B cell (primary cell): ENCODE measurements at regions of chr6 and their contacts with region 1.

Region 1: GRCh38 chr6:143842902-143843676 is at the start of gene LTV1:
- DNase-seq: peak; percentile 95
- ATAC-seq: peak; percentile 97
- H3K4me3 ChIP-seq: peak within 1 kb of the TSS; percentile 72 to 94 (median 90)
- H3K4me3 Mint-ChIP-seq: peak within 1 kb of the TSS; percentile 93
- H3K27ac ChIP-seq: peak within 1 kb of the TSS; percentile 86 to 93
- H3K27ac Mint-ChIP-seq: peak within 1 kb of the TSS; percentile 95
- H3K4me1 ChIP-seq: peaks cover 11 to 17% of the 10 kb centered on the region in 2 donors
- H3K4me1 Mint-ChIP-seq: peaks cover 17% of the 10 kb centered on the region
- H3K27me3 ChIP-seq: no peaks in the 10 kb centered on the region
- H3K27me3 Mint-ChIP-seq: peaks cover 11% of the 10 kb centered on the region
- CTCF ChIP-seq: no peak
- total RNA-seq, gene LTV1: 23.6 and 27.3 TPM in 2 replicates

Region 2: DNA sequence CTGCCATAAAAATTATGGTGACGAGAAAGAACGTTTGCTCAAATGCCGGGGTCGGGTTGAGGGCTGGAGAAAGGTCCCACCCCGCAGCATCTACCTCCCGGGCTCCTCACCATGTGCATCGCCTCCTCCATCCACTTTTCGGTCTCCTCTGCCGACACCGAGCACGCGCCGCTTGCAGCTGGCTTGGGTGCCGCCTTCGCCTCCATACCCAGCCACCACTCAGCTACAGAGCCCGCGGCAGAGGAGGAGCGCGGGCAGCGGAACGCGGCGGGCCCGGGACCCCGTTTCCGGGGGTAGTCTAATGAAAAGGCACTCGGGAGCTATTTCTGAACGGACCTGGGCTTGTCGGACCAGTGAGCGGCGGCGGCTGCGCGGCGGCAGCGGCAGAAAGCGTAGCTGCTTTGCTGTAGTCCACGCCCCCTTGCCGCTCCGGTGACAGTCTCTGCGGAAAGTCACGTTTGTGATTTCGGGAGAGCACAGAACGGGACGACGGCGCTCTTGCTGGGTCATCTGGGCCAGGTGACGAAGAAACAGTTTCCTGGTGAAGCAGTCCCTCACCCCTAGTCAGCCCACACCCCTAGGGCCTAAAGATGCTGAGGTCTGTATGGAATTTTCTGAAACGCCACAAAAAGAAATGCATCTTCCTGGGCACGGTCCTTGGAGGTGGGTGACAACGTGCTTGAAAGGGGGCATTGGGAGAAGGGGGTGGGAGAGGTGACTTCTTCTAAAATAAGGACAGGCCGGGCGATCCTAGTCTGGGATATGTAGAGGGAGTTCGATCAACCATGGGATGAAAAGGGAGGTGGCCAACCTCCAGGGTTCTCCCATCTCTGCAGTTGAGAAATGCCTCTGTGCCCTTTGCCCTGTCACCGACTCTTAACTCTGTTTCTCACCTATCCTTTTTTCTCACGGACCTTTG is 392.4 kb before region 1 on chr6 and contains the starts of genes ADAT2 and PEX3:
- CTCF ChIA-PET with region 1: no interaction called
- POLR2A ChIA-PET with region 1: interaction called, 10 read pairs
- intact Hi-C with region 1: loop called (anchors 1 kb)
- DNase-seq: peak; percentile 96
- ATAC-seq: peak; percentile 95
- H3K4me3 ChIP-seq: peak within 1 kb of the TSS; percentile 69 to 95 (median 87)
- H3K4me3 Mint-ChIP-seq: peak within 1 kb of the TSS; percentile 95
- H3K27ac ChIP-seq: peak within 1 kb of the TSS; percentile 59 to 82
- H3K27ac Mint-ChIP-seq: peak within 1 kb of the TSS; percentile 94
- H3K4me1 ChIP-seq: peaks cover 15 to 18% of the 10 kb centered on the region in 2 donors
- H3K4me1 Mint-ChIP-seq: peaks cover 33% of the 10 kb centered on the region
- H3K27me3 ChIP-seq: no peaks in the 10 kb centered on the region
- H3K27me3 Mint-ChIP-seq: no peaks in the 10 kb centered on the region
- CTCF ChIP-seq: no peak
- total RNA-seq, gene ADAT2: 15.2 and 16.0 TPM in 2 replicates
- total RNA-seq, gene PEX3: 23.2 and 31.1 TPM in 2 replicates

Region 3: DNA sequence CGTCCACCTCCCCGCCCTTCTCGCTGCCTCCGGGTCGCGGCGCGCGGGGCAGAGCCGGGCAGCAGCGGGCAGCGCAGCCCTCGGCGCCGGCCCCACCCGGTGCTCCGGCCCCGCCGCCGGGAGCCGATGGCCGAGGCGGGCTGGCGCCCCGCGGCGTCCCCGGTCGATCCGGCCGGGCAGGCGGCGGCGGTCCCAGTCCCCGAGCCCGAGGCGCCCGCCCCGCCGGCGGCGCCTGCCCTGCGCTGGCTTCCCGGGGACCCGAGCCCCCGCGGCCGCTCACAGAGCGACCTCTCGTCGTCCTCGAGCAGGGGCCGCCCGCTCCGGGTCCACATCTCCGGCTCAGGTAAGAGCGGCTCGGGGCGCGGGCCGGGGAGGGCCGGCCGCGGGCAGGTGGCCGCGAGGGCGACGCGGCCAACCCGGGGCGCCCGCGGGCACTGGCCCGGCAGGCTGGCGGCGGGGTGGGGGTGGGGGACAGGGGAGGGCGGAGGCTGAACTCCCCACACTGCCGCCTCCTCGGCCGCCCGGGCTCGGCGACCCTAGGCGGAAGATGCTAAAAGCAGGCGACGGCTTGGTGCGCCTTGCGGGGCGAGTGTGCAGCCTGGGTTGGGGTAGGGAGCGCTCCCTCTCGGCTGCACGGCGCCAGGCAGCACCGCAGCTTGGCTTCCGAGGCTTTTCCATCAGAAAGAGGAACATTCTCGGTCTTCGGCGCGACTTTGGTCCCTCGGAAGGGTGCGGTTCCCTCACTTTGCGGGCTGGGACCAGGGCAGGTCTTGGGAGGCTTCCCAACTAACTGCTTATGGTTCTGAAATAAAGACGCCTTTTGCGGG is 306.0 kb before region 1 on chr6:
- CTCF ChIA-PET with region 1: no interaction called
- POLR2A ChIA-PET with region 1: no interaction called
- intact Hi-C with region 1: loop called (anchors 2 kb)
- DNase-seq: peak; percentile 75
- ATAC-seq: peak; percentile 65
- H3K4me3 ChIP-seq: peak overlapping the region; percentile 28 to 67 (median 56)
- H3K4me3 Mint-ChIP-seq: peak overlapping the region; percentile 86
- H3K27ac ChIP-seq: no peak overlapping the region
- H3K27ac Mint-ChIP-seq: peak overlapping the region; percentile 78
- H3K4me1 ChIP-seq: peaks cover 22 to 31% of the 10 kb centered on the region in 2 donors
- H3K4me1 Mint-ChIP-seq: peaks cover 29% of the 10 kb centered on the region
- H3K27me3 ChIP-seq: no peaks in the 10 kb centered on the region
- H3K27me3 Mint-ChIP-seq: no peaks in the 10 kb centered on the region
- CTCF ChIP-seq: peak; percentile 22

Region 4: DNA sequence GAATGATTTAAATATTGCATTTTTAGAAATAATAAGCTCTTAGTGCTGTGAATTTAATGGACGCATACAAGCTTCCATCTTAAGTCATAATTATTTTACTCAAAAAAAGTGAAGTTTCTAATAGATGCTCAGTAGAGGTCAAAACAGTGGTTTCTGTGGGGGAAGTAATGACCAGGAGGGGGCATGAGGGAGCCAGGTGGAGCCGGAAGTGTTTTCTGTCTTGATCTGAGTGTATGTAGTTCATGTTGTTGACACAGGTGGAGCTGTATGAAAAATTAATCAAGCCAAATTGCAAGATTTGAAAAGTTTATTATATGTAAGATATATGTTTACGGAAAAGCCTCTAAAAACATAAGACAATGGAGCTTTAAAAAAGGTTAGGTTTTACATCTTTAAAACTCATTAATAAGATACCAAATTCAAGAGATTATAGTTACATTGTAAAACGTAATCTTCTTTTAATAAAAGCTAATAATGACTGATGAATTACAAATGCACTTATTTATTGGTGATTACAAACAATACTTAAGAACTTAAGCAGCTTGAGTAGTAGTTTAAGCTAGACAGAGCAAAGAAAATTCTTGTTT is 97.0 kb after region 1 on chr6:
- CTCF ChIA-PET with region 1: interaction called, 3 read pairs
- POLR2A ChIA-PET with region 1: no interaction called
- intact Hi-C with region 1: loop called (anchors 5 kb)
- DNase-seq: peak; percentile 74
- ATAC-seq: peak; percentile 98
- H3K4me3 ChIP-seq: no peak overlapping the region
- H3K4me3 Mint-ChIP-seq: no peak overlapping the region
- H3K27ac ChIP-seq: no peak overlapping the region
- H3K27ac Mint-ChIP-seq: no peak overlapping the region
- H3K4me1 ChIP-seq: no peaks in the 10 kb centered on the region
- H3K4me1 Mint-ChIP-seq: peaks cover 3% of the 10 kb centered on the region
- H3K27me3 ChIP-seq: no peaks in the 10 kb centered on the region
- H3K27me3 Mint-ChIP-seq: no peaks in the 10 kb centered on the region
- CTCF ChIP-seq: peak; percentile 92

Region 5: DNA sequence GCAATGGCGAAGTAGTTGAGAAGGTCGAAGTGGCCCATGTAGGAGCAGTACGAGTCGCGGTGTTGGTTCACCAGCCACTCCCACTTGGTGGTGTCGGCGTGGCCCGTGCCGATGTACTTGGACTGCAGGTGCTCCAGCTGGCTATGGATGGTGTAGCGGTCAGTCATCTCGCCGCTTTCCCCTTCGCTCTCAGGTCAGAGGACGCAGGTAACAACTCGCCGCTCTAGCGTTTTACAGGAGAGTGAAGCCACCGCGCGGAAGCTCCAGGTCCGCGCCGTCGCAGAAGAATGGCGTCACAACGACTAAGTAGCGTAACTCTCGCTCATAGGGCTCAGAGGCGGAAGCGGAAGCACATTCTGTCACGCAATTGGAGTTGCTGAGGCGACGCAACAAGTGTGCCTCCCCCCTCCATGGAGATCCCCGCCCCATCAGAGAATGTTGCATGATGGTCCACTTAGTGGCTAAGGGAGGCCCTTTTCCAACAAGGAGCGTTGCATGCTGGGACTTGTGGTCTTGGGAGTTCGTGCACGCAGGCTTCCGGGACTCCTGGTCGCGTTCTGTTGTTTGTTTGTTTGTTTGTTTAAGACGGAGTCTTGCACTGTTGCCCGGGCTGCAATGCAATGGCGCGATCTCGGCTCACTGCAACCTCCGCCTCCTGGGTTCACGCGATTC is 252.4 kb after region 1 on chr6 and contains the start of gene SF3B5:
- CTCF ChIA-PET with region 1: no interaction called
- POLR2A ChIA-PET with region 1: interaction called, 4 read pairs
- intact Hi-C with region 1: loop called (anchors 1 kb)
- DNase-seq: peak; percentile 99
- ATAC-seq: peak; percentile 97
- H3K4me3 ChIP-seq: peak within 1 kb of the TSS; percentile 63 to 98 (median 73)
- H3K4me3 Mint-ChIP-seq: peak within 1 kb of the TSS; percentile 100
- H3K27ac ChIP-seq: peak within 1 kb of the TSS; percentile 77 to 84
- H3K27ac Mint-ChIP-seq: peak within 1 kb of the TSS; percentile 100
- H3K4me1 ChIP-seq: peaks cover 16 to 22% of the 10 kb centered on the region in 2 donors
- H3K4me1 Mint-ChIP-seq: peaks cover 23% of the 10 kb centered on the region
- H3K27me3 ChIP-seq: no peaks in the 10 kb centered on the region
- H3K27me3 Mint-ChIP-seq: no peaks in the 10 kb centered on the region
- CTCF ChIP-seq: no peak
- total RNA-seq, gene SF3B5: 104 and 111 TPM in 2 replicates

Region 6: DNA sequence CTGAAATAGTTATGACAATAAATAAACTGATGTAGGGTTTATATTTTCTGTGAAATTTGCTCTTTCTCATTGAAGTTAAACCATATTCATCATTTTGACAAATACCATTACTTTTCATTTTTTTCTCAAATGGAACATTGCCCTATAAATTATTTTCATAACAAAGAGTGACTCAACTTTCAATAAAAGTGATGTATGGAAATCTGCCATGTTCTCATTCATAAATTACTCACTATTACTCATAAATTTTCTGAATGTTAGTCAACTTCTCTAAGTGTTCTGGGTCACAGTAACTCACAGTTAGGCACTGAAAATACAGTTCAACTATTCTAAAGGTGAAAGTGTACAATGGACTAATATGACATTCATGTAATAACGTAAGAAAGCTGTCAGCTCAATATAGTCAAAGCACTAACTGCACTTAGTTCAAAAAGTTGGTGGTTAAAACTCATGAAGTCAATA is 288.2 kb after region 1 on chr6:
- CTCF ChIA-PET with region 1: no interaction called
- POLR2A ChIA-PET with region 1: no interaction called
- intact Hi-C with region 1: no loop called
- DNase-seq: no peak
- ATAC-seq: no peak
- H3K4me3 ChIP-seq: no peak overlapping the region
- H3K4me3 Mint-ChIP-seq: no peak overlapping the region
- H3K27ac ChIP-seq: no peak overlapping the region
- H3K27ac Mint-ChIP-seq: no peak overlapping the region
- H3K4me1 ChIP-seq: no peaks in the 10 kb centered on the region
- H3K4me1 Mint-ChIP-seq: peaks cover 3% of the 10 kb centered on the region
- H3K27me3 ChIP-seq: peaks cover 0 to 4% (median 0%) of the 10 kb centered on the region in 4 experiments
- H3K27me3 Mint-ChIP-seq: peaks cover under 1% of the 10 kb centered on the region
- CTCF ChIP-seq: no peak